HEK293T (cell line): ENCODE measurements at regions of chr14 and their contacts with region 1.

Region 1: DNA sequence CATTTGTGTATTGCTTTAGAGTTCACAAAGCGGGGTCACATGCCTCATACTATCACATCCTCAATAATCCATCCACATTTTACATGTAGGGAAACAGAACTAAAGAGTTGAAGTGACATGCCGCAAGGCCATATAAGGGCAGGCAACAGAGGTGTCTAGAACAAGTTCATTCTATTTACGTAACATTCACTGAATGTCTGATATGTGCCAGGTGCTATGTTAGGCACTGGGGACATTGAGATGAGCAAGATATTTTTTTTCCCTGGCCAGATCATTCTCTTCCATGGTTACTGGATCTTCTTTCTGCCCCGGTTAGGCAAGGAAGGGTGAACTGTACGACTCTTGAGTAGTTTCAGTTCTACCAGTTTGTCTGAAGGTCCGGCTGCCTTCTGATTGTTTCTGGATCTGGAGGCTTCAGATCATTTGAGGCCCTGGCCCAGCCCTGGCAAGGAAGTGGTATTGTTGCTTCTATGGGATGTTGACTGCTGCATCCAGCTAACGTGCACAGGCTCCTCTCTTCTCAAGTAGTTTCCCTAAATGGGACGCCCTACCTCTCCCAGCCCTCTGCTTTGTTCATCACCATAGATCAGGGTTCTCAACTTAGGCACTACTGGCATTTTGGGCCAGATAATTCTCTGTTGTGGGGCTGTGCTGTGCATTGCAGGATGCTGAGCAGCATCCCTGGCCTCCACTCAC is 12.1 kb downstream of the GPATCH2L start:
- DNase-seq: no peak

Region 2: GRCh38 chr14:76151398-76152339 is 12.1 kb before region 1 on chr14 and contains the start of gene GPATCH2L:
- CTCF ChIA-PET with region 1: no interaction called
- POLR2A ChIA-PET with region 1: interaction called, 17 read pairs
- DNase-seq: peak; percentile 99